ENCODE measurements at regions of chr20 and their contacts with region 1.

Region 1: GRCh38 chr20:19784511-19785172 is 26.6 kb downstream of the RIN2 start:
- DNase-seq: peak; percentile 29 to 52 (median 32)
- ATAC-seq: peak; percentile 80
- H3K4me3 ChIP-seq: no peak overlapping the region
- H3K27ac ChIP-seq: no peak overlapping the region
- H3K4me1 ChIP-seq: no peaks in the 10 kb centered on the region
- H3K27me3 ChIP-seq: no peaks in the 10 kb centered on the region; a peak in 1 of 5 replicates
- CTCF ChIP-seq: peak; percentile 47 to 61 (median 56)
- EP300 ChIP-seq: no peak
- POLR2A ChIP-seq: no peak
- RAD21 ChIP-seq: peak; percentile 43 to 52

Region 2: DNA sequence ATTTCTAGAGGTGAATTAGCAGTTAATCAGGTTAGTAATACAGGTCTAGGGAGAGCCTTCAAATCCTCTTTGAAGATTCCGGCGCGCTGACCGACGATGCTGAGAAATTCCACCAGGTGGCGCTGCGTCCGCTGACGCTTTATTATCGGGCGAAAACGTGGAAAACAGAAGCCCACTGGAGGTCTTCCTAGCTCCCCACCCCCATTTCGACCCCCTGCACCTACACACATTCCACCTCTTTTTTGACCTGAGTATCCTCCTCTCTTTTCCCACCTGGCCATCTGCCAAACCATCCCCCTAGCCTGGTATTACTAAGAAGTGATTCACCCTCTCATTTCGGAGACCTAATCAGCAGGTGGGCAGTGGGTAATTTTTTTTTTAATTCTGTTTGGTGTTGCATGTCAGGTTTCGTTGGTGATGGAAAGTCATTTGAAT is 91.9 kb before region 1 on chr20:
- CTCF ChIA-PET with region 1: no interaction called
- POLR2A ChIA-PET with region 1: no interaction called
- in situ Hi-C with region 1: no loop called
- intact Hi-C with region 1: loop called (anchors 10 kb)
- DNase-seq: peak; percentile 32 to 52 (median 42)
- ATAC-seq: peak; percentile 62; the same call in 1 of the 3 replicates
- H3K4me3 ChIP-seq: no peak overlapping the region
- H3K27ac ChIP-seq: no peak overlapping the region
- H3K4me1 ChIP-seq: no peaks in the 10 kb centered on the region
- H3K27me3 ChIP-seq: no peaks in the 10 kb centered on the region; a peak in 1 of 5 replicates
- CTCF ChIP-seq: peak; percentile 56 to 76 (median 59)
- EP300 ChIP-seq: no peak
- POLR2A ChIP-seq: no peak
- RAD21 ChIP-seq: peak in 1 of 2 experiments; percentile 49; a peak in 3 of 4 replicates

Measured in K562 (cell line).